CD4-positive, alpha-beta T cell (primary cell): ENCODE measurements at regions of chr7 and their contacts with region 1.

Region 1: GRCh38 chr7:27972276-27972675 is 208.3 kb downstream of the JAZF1 start:
- DNase-seq: peak in 7 of 14 experiments; percentile 8 to 62 (median 19)
- ATAC-seq: peak; percentile 77
- H3K4me3 ChIP-seq: peak overlapping the region; percentile 35
- H3K4me3 Mint-ChIP-seq: peak overlapping the region; percentile 67
- H3K27ac ChIP-seq: no peak overlapping the region
- H3K27ac Mint-ChIP-seq: peak overlapping the region; percentile 74
- H3K4me1 ChIP-seq: peaks cover 14% of the 10 kb centered on the region
- H3K4me1 Mint-ChIP-seq: peaks cover 34% of the 10 kb centered on the region
- H3K27me3 ChIP-seq: no peaks in the 10 kb centered on the region
- H3K27me3 Mint-ChIP-seq: no peaks in the 10 kb centered on the region
- CTCF ChIP-seq: no peak

Region 2: GRCh38 chr7:27952456-27953285 is 19.6 kb before region 1 on chr7:
- CTCF ChIA-PET with region 1: no interaction called
- POLR2A ChIA-PET with region 1: interaction called, 50 read pairs
- intact Hi-C with region 1: loop called in 1 of 2 experiments (anchors 2 kb)
- DNase-seq: peak in 2 of 14 experiments; percentile 7 to 47
- ATAC-seq: peak; percentile 79
- H3K4me3 ChIP-seq: no peak overlapping the region
- H3K4me3 Mint-ChIP-seq: peak overlapping the region; percentile 77
- H3K27ac ChIP-seq: peak overlapping the region; percentile 33 to 38
- H3K27ac Mint-ChIP-seq: peak overlapping the region; percentile 92
- H3K4me1 ChIP-seq: peaks cover 22% of the 10 kb centered on the region
- H3K4me1 Mint-ChIP-seq: peaks cover 55% of the 10 kb centered on the region
- H3K27me3 ChIP-seq: no peaks in the 10 kb centered on the region
- H3K27me3 Mint-ChIP-seq: no peaks in the 10 kb centered on the region
- CTCF ChIP-seq: no peak